ENCODE measurements at regions of chr5 and their contacts with region 1.

Region 1: DNA sequence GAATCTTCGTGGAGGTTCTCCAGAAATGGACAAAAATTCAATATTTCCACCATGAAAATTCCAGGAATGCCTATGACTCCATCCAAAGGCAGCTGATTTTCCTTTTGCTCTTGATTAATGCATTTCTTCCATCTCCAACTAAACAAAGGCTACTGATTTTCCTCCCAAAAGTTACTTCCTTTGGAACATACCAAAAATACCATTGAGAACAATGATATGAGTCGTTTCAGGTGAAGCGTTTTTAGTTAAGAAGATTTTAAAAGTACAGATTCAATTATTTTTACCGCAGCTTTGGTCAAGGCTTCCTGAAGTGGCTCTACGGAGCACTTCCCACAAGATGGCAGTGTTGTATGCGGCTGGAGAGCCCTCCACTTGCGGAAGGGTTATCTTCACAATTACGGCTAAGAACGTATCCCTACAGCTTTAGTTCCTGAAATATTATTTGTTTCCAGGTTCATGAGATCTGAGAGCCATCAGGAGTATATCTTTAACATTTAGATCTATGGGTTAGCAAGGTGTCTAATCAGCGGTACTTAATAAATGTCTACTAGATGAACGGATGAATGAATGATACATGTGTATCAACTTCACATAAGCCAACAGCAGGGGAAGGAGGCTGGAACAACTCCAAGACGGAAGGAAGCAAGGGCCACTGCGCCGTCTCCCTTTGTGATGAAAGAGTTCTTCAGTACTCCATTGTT is 35.9 kb upstream of the ARSB start:
- DNase-seq: no peak
- H3K4me3 ChIP-seq: peak overlapping the region; percentile 12 to 24 (median 21)
- H3K27ac ChIP-seq: peak overlapping the region; percentile 69 to 80 (median 77)
- H3K4me1 ChIP-seq: peaks cover 8 to 46% (median 42%) of the 10 kb centered on the region in 4 donors
- H3K27me3 ChIP-seq: no peaks in the 10 kb centered on the region
- CTCF ChIP-seq: peak; percentile 83 to 87 (median 85)
- EP300 ChIP-seq: no peak
- POLR2A ChIP-seq: no peak

Region 2: DNA sequence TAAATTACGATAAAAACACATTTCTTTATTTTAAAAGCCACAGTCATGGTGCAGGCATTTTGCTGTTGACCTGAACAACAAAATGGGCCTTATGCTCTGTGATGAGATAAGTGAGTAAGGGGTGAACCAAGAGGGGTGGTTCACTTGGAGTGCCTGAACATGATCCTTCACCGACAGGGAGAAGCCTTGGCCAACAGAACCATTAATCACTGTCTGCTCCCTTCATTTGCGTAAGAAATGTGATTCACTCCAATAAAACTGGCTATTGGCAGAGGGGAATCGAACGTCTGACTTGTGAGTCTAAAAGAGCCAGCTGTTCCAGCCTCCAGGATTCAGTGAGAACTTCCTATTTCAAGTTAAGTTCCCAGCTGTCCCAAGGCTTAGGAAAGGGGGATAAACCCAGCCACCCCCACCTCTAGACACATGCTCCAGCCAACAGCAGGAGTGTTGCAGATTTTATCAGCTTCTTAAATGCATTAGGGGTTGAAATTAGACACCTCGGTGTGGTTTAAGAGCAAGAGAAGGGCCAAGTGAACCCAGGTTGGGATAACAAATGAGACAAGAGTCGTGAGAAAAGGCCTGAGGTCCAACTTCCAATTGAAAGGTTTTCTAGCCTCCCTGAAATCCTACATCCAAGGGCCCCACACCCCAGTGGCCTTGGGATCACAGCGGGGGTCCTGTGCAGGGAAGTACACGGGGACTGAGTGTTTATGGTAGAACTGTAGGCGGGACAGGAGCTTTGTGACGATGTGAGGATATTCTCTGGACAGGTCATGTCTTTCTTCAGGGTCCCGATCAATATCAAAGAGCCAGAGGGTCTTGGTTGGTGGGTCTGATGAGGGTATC is 241.0 kb before region 1 on chr5:
- intact Hi-C with region 1: no loop called
- DNase-seq: no peak
- H3K4me3 ChIP-seq: no peak overlapping the region
- H3K27ac ChIP-seq: peak overlapping the region; percentile 13 to 32 (median 18)
- H3K4me1 ChIP-seq: no peaks in the 10 kb centered on the region
- H3K27me3 ChIP-seq: no peaks in the 10 kb centered on the region
- CTCF ChIP-seq: no peak
- EP300 ChIP-seq: no peak
- POLR2A ChIP-seq: no peak

Region 3: DNA sequence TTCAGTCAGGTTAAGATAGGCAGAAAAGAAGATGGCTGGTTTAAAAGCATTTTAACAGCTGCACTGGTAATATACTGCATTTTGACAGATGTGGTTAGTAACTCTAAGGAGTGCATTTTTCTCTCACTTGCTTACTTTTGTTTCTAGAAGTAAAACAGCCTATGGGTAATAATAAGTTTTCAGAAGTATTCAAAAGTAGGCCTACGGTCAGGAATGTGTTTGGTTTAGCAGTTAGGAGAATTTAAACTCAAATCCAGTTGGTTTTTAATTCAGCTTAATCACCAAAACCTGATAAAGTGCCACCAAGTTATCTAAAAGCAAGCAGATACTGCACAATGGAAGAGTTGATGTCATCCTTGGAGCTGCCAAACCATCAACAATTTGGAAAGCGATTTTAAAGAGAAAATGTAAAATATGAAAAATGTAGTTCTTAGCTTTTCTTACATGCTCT is 196.2 kb before region 1 on chr5:
- intact Hi-C with region 1: no loop called
- DNase-seq: no peak
- H3K4me3 ChIP-seq: no peak overlapping the region
- H3K27ac ChIP-seq: no peak overlapping the region
- H3K4me1 ChIP-seq: peaks cover 0 to 7% (median 6%) of the 10 kb centered on the region in 4 donors
- H3K27me3 ChIP-seq: no peaks in the 10 kb centered on the region
- CTCF ChIP-seq: no peak
- EP300 ChIP-seq: no peak
- POLR2A ChIP-seq: no peak

Region 4: DNA sequence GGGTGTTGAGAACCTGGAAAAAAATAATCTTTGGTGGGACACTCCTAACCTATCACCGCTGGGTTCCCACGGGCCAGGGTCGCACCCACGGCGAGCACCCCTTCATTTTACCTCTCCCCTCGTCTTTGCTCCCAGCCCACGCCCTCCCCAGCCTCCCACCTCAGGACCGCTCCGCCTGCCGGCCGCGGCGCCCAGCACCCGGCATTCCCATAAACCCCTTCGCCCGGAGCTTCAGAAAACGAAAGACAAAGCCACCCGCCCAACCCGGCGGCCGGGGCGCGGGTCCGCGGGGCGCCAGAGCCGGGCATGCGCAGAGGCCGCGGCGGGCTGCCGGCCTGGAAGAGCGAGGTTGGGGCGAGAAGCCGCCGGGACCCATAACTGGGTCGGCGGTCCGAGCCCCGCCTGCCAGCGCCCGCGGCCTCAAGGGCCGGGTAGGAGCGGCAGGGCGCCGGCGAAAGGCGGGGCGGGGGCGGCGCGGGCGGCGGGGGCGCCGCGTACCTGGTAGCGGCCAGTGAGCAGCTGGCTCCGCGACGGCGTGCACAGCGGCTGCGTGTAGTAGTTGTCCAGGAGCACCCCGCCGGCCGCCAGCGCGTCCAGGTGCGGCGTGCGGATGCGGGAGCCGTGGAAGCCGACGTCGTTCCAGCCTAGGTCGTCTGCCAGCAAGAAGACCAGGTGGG is 36.4 kb before region 1 on chr5:
- intact Hi-C with region 1: loop called (anchors 5 kb)
- DNase-seq: peak; percentile 96
- H3K4me3 ChIP-seq: peak overlapping the region; percentile 79 to 88 (median 86)
- H3K27ac ChIP-seq: peak overlapping the region; percentile 96 to 99 (median 98)
- H3K4me1 ChIP-seq: peaks cover 15 to 55% (median 47%) of the 10 kb centered on the region in 4 donors
- H3K27me3 ChIP-seq: no peaks in the 10 kb centered on the region
- CTCF ChIP-seq: peak; percentile 25 to 56 (median 41)
- EP300 ChIP-seq: no peak
- POLR2A ChIP-seq: no peak

Region 5: DNA sequence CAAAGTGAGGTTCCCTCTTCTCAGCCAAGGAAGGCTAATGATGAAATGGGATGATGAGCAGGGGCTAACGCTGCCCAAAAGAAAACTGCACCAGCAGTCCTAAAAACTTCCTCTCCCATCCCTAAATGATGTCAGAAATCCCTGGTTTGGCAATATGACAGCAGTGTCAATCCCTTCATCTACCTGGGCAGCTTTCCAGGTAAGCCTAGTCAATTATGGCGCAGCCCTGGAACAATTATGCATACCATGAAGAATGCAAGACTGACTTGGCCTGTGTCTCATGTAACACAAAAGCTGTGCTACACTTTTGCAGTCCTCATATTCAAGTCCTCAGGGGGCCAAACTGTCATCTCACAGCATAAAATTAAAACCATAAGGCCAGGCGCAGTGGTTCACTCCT is 41.4 kb after region 1 on chr5:
- intact Hi-C with region 1: no loop called
- DNase-seq: no peak
- H3K4me3 ChIP-seq: no peak overlapping the region
- H3K27ac ChIP-seq: no peak overlapping the region
- H3K4me1 ChIP-seq: no peaks in the 10 kb centered on the region
- H3K27me3 ChIP-seq: no peaks in the 10 kb centered on the region
- CTCF ChIP-seq: no peak
- EP300 ChIP-seq: no peak
- POLR2A ChIP-seq: no peak

Region 6: GRCh38 chr5:79133657-79134451 is 112.8 kb after region 1 on chr5:
- intact Hi-C with region 1: loop called (anchors 1 kb)
- DNase-seq: peak; percentile 94
- H3K4me3 ChIP-seq: peak overlapping the region; percentile 41 to 51 (median 44)
- H3K27ac ChIP-seq: peak overlapping the region; percentile 79 to 87 (median 82)
- H3K4me1 ChIP-seq: peaks cover 5 to 21% (median 16%) of the 10 kb centered on the region in 4 donors
- H3K27me3 ChIP-seq: no peaks in the 10 kb centered on the region
- CTCF ChIP-seq: peak; percentile 69 to 83 (median 78)
- EP300 ChIP-seq: no peak
- POLR2A ChIP-seq: no peak

Region 7: DNA sequence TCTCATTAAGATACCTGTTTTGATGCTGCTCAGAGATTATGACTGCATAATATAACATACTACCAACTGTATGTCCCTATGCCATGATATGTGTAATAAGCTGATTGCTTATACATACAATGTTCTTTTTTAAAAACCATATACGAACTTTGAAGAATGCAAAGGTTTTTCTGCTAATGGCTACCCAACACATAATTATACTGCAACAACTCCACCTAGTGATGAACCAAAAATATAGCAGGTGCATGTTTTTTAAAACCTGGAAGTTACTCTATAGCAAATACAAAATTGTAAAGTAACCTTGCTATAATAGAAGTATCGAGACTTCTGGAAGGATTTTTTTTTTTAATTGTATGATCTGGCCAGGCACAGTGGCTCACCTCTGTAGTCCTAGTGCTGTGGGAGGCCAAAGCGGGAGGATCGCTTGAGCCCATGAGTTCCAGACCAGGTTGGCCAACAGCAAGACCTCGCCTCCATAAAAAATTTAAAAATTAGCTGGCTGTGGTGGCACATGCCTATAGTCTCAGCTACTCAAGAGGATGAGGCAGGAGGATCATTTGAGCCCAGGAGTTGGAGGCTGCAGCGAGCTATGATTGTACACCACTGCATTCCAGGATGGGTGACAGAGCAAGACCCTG is 443.8 kb after region 1 on chr5:
- intact Hi-C with region 1: loop called (anchors 2 kb)
- DNase-seq: no peak
- H3K4me3 ChIP-seq: no peak overlapping the region
- H3K27ac ChIP-seq: no peak overlapping the region
- H3K4me1 ChIP-seq: peaks cover 0 to 9% (median 6%) of the 10 kb centered on the region in 4 donors
- H3K27me3 ChIP-seq: no peaks in the 10 kb centered on the region
- CTCF ChIP-seq: peak; percentile 63 to 71 (median 64)
- EP300 ChIP-seq: no peak
- POLR2A ChIP-seq: no peak

Region 8: DNA sequence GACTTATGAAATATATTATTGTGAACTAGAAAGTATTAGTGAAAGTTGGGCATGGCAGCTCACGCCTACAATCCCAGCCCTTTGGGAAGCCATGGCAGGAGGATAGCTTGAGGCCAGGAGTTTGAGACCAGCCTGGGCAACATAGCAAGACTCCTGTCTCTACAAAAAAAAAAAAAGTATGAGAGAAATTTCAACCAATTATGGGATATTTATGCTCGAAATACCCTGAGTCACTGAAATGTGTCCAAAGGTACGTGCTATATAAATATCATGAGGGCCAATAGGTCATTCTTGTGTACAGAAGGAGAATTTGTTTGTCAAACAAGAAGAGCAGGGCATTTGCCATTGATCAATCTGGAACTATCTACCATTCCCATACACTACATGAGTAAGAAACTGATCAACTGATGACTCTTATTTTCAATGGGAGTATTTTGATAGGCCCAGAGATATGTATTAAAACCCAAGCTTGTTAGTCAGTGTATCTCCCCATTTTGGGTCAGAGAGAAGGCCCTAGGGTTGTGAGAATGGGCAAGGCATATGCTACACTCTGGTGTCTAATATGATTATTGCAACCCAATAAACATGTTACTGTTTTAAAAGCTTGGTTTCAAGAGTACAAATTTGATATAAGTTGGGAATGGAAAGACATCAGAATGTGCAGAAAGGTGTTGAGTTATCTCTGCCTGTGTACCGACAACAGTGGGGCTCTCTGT is 514.6 kb after region 1 on chr5:
- intact Hi-C with region 1: loop called (anchors 5 kb)
- DNase-seq: no peak
- H3K4me3 ChIP-seq: no peak overlapping the region
- H3K27ac ChIP-seq: no peak overlapping the region
- H3K4me1 ChIP-seq: no peaks in the 10 kb centered on the region
- H3K27me3 ChIP-seq: no peaks in the 10 kb centered on the region
- CTCF ChIP-seq: peak in 1 of 3 experiments; percentile 25
- EP300 ChIP-seq: no peak
- POLR2A ChIP-seq: no peak

Region 9: DNA sequence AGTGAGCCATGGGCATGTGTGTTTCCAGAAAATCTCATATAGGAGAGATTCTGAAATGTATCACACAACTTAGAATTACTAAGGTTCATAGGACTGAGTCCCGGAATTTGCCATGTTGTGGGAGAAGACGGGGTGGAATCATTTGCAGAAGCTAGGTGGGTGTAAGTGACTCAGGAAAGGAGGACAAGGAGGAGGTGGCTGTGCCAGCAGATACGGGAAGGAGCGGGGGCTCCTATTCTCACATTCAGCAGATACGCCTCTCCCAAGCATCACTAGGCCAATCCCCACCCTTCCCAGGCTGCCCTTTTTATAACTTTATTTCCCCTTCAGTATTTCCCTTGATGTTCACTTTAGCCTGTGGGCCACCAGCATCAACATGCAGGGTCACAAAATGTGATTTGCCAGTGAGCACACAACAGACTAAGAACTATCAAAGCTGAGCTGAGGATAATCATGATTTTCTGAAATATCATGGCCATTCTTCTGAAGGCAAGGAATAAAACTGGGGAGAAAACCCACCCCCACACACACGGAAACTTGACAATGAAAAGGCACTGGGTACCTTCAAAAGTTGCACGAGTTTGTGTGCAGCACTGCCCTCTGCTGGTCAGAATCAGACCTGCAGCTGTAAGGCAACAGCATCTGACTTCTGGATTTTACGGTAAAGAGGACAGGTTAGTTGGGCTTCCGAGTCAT is 836.9 kb after region 1 on chr5:
- intact Hi-C with region 1: loop called (anchors 10 kb)
- DNase-seq: no peak
- H3K4me3 ChIP-seq: no peak overlapping the region
- H3K27ac ChIP-seq: no peak overlapping the region
- H3K4me1 ChIP-seq: no peaks in the 10 kb centered on the region
- H3K27me3 ChIP-seq: no peaks in the 10 kb centered on the region
- CTCF ChIP-seq: peak; percentile 90 to 97 (median 95)
- EP300 ChIP-seq: no peak
- POLR2A ChIP-seq: no peak

Measured in esophagus muscularis mucosa (tissue), 4 donors.